ENCODE measurements at regions of chr7 and their contacts with region 1.

Region 1: GRCh38 chr7:8217200-8218068 is 44.5 kb downstream of the ICA1 start:
- DNase-seq: no peak
- ATAC-seq: peak; percentile 26 to 51

Region 2: GRCh38 chr7:7424151-7424873 is 793.1 kb before region 1 on chr7:
- intact Hi-C with region 1: loop called (anchors 10 kb)
- DNase-seq: peak; percentile 46
- ATAC-seq: peak; percentile 90 to 93

Region 3: DNA sequence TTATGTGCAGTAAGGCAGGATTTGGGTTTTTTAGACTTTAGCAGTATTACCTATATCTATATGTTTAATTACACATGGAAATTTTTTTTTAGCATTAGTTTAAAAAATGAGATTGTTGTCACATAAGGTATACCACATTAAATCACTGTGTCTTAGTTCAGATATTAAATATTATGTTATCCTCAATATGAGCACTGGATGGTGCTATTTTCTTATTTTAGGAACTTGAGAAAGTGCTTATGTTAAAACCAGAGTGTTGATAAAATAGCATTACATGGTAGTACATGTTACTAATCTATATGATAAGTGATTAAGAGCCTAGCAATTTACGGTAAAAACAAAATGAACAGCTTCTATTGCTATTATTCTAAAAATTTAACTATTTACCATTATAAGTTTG is 622.0 kb before region 1 on chr7:
- intact Hi-C with region 1: loop called in 1 of 2 experiments (anchors 5 kb)
- DNase-seq: no peak
- ATAC-seq: no peak

Region 4: GRCh38 chr7:7761340-7761980 is 456.0 kb before region 1 on chr7:
- intact Hi-C with region 1: loop called in 1 of 2 experiments (anchors 10 kb)
- DNase-seq: no peak
- ATAC-seq: peak in 1 of 2 donors; percentile 74

Region 5: DNA sequence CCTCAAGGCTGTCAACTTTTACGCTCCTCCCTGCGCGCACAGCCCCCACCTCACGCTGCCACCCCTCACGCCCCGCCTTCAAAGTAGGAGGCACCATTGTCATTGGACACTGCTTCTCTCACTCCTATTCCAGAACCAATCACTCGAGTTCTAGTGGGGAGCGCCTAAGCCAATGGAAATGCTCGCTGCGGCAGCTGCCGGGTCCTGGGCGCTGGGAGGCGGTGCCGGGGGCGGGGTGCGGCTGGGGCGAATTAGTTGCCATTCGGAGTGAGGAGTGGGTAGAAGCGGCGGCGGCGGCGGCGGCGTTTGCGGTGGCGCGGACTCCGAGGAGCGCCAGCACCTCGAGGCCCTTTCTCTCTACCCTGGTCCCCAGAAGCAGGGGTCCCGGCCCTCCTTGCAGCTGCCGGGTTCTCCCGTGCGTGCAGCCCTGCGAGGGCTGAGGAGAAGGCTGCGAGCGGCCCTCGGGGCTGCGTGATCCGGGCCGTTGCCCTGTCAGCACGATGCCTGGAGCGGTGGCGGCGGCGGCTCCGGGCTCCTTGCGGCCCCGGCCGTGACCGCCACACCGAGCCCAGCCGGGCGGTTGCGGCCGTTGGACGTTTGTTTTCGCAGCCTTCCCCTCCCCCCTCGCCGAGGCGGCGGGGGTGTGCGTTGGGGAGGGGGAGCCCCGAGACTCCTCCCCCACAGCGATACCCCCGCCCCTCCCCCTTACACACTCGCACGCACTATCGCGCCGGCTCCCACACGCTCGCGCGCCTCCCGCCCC is 248.7 kb before region 1 on chr7 and contains the start of gene GLCCI1:
- intact Hi-C with region 1: loop called in 1 of 2 experiments (anchors 10 kb)
- DNase-seq: peak; percentile 96
- ATAC-seq: peak; percentile 97 to 99
- total RNA-seq, gene GLCCI1: 6.4 to 8.2 TPM